Naive thymus-derived CD8-positive, alpha-beta T cell (primary cell): ENCODE measurements at regions of chr11 and their contacts with region 1.

Region 1: DNA sequence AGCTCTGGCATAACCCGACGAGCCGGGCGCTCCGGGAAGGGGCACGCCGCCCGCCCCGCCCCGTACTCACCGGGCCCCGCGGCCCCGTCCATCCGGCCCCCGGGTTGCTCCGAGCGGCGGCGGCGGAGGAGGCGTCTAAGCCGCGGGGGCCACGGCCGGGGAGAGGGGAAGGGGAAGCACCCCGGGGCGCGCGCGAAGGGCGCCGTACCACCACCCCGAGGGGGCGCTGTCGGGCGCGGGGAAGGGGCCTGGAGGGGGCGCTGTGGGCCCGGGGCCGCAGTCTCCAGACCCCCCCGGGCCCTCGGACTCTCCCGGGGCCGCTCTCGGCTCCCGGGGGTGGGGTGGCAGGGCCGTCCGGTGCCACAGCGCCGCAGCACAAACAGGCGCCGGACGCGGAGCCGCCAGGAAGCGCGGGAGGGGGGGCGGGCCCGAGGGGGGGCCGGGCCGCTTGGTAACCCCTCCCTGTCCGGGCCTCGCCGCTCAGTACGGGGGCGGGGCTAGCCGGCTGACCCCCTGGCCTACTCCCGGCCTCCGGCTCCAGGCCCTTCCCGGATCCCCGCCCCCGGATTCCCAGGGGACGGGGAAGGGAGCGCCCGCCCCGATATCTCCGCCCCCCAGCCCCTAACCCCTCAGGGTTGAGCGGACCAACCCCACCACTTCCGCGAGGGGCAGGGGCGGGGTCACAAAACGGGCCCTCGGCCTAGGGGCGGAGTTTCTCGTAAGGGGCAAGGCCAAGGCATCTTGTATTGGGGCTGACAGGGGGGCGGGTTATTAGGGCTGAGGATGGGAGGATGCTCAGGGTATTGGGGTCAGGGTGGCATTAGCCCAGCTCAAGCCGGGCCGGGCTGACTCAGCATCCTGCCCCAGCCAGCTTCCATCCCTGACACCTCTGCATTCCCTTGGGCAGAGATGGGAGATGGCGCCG is at the starts of genes EML3 and ROM1:
- DNase-seq: peak; percentile 79 to 94 (median 88)
- ATAC-seq: peak; percentile 74 to 78
- H3K4me3 Mint-ChIP-seq: peak within 1 kb of the TSS; percentile 91 to 98 (median 94)
- H3K27ac Mint-ChIP-seq: peak within 1 kb of the TSS; percentile 96 to 99 (median 98)
- H3K4me1 Mint-ChIP-seq: peaks cover 32 to 59% (median 57%) of the 10 kb centered on the region in 4 donors
- H3K27me3 Mint-ChIP-seq: no peaks in the 10 kb centered on the region
- polyA plus RNA-seq, gene EML3: 14.8 to 23.7 (median 15.7) TPM
- polyA plus RNA-seq, gene ROM1: 0.82 to 1.9 (median 1.8) TPM

Region 2: GRCh38 chr11:62645956-62646824 is 33.6 kb after region 1 on chr11 and contains the start of gene GANAB:
- POLR2A ChIA-PET with region 1: interaction called, 43 read pairs
- DNase-seq: peak; percentile 94 to 99 (median 97)
- ATAC-seq: peak; percentile 97 to 98
- H3K4me3 Mint-ChIP-seq: peak within 1 kb of the TSS; percentile 92 to 99 (median 97)
- H3K27ac Mint-ChIP-seq: peak within 1 kb of the TSS; percentile 90 to 99 (median 98)
- H3K4me1 Mint-ChIP-seq: peaks cover 9 to 50% (median 32%) of the 10 kb centered on the region in 4 donors
- H3K27me3 Mint-ChIP-seq: no peaks in the 10 kb centered on the region
- polyA plus RNA-seq, gene GANAB: 171 to 197 (median 174) TPM

Region 3: DNA sequence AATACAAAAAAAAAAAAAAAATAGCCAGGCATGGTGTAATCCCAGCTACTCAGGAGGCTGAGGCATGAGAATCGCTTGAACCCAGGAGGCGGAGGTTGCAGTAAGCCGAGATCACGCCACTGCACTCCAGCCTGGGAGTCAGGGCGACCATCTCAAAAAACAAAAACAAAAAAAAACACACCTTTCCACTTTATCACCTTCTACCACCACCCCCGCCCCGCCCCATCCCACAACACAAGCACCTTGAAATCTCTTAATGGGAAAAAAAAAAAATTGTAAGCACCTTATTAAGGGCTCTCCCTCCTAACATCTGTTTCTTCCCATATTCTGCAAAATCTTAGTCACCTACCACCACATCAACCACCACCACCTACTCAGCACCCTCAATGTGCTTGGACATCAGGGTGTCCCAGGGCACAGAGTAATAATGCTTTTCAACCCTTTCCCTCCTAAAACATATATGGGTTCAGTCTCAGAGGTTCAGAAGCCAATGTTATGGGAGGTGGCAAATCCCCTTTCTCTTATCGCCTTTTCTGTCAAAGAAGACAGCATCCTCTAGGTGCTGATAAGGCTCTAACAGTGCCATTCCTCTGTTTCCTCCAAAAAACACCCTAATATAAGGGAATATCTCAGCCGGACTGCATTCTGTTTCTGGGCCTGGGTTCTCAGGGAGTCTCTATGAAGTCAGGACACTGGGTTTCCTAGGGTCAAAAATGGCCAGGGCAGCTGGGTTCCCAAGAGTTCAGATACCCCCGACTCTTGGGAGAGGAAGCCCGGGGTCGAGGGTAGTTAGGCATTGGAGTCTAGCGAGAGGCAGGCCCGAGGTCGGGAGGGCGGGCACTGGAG is 39.8 kb after region 1 on chr11:
- POLR2A ChIA-PET with region 1: interaction called, 43 read pairs
- DNase-seq: peak in 4 of 10 donors; percentile 34 to 57 (median 44)
- ATAC-seq: peak; percentile 6 to 49
- H3K4me3 Mint-ChIP-seq: peak overlapping the region; percentile 86 to 96 (median 92)
- H3K27ac Mint-ChIP-seq: peak overlapping the region; percentile 82 to 100 (median 94)
- H3K4me1 Mint-ChIP-seq: peaks cover 12 to 37% (median 21%) of the 10 kb centered on the region in 4 donors
- H3K27me3 Mint-ChIP-seq: no peaks in the 10 kb centered on the region

Region 4: GRCh38 chr11:62671575-62672389 is 59.2 kb after region 1 on chr11 and contains the starts of genes LBHD1 and UQCC3:
- POLR2A ChIA-PET with region 1: interaction called, 65 read pairs
- DNase-seq: peak; percentile 52 to 85 (median 68)
- ATAC-seq: peak; percentile 75 to 76
- H3K4me3 Mint-ChIP-seq: peak within 1 kb of the TSS; percentile 96 to 100 (median 98)
- H3K27ac Mint-ChIP-seq: peak within 1 kb of the TSS; percentile 92 to 99 (median 96)
- H3K4me1 Mint-ChIP-seq: peaks cover 22 to 67% (median 50%) of the 10 kb centered on the region in 4 donors
- H3K27me3 Mint-ChIP-seq: no peaks in the 10 kb centered on the region
- polyA plus RNA-seq, gene LBHD1: 2.4 to 8.3 (median 4.4) TPM
- polyA plus RNA-seq, gene UQCC3: 9.1 to 9.7 (median 9.6) TPM

Region 5: DNA sequence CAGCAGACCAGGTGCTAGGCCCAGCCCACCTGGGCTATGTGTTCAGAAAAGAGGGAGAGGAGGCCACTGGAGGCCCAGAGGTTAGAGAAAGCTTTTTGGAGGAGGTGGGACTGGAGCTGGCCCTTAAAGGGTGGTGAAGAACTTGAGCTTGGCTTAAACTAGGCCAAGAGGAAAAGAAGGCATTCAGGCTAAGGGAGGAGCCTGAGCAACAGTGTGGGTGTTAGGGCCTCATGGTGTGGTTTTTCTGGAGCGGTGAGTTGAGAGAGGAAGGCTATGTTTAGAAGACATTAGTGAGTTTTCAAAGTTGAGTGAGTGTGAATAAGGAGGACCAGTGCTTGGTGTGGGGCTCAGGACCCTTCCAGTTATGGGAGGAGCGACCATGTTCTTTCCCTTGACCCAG is 164.8 kb after region 1 on chr11:
- POLR2A ChIA-PET with region 1: no interaction called
- DNase-seq: no peak
- ATAC-seq: no peak
- H3K4me3 Mint-ChIP-seq: no peak overlapping the region
- H3K27ac Mint-ChIP-seq: peak overlapping the region in 3 of 10 donors; percentile 19 to 74 (median 57)
- H3K4me1 Mint-ChIP-seq: peaks cover 5 to 11% (median 7%) of the 10 kb centered on the region in 4 donors
- H3K27me3 Mint-ChIP-seq: no peaks in the 10 kb centered on the region